ENCODE measurements at regions of chrX and their contacts with region 1.

Region 1: GRCh38 chrX:129318375-129318774 is 204.9 kb downstream of the SMARCA1 start:
- DNase-seq: peak; percentile 8
- ATAC-seq: no peak
- H3K4me3 Mint-ChIP-seq: no peak overlapping the region
- H3K27ac Mint-ChIP-seq: no peak overlapping the region
- H3K4me1 Mint-ChIP-seq: no peaks in the 10 kb centered on the region
- H3K27me3 Mint-ChIP-seq: no peaks in the 10 kb centered on the region

Region 2: GRCh38 chrX:128078545-128078944 is 1239.8 kb before region 1 on chrX:
- CTCF ChIA-PET with region 1: no interaction called
- POLR2A ChIA-PET with region 1: no interaction called
- intact Hi-C with region 1: no loop called
- DNase-seq: no peak
- ATAC-seq: no peak
- H3K4me3 Mint-ChIP-seq: no peak overlapping the region
- H3K27ac Mint-ChIP-seq: no peak overlapping the region
- H3K4me1 Mint-ChIP-seq: no peaks in the 10 kb centered on the region
- H3K27me3 Mint-ChIP-seq: no peaks in the 10 kb centered on the region

Region 3: GRCh38 chrX:129462707-129463106 is 144.3 kb after region 1 on chrX:
- CTCF ChIA-PET with region 1: no interaction called
- POLR2A ChIA-PET with region 1: no interaction called
- intact Hi-C with region 1: loop called in 1 of 2 experiments (anchors 2 kb)
- DNase-seq: no peak
- ATAC-seq: no peak
- H3K4me3 Mint-ChIP-seq: no peak overlapping the region
- H3K27ac Mint-ChIP-seq: no peak overlapping the region
- H3K4me1 Mint-ChIP-seq: no peaks in the 10 kb centered on the region
- H3K27me3 Mint-ChIP-seq: no peaks in the 10 kb centered on the region